ENCODE measurements at regions of chr3 and their contacts with region 1.

Region 1: GRCh38 chr3:30628901-30629590 is 22.6 kb downstream of the TGFBR2 start:
- DNase-seq: no peak
- ATAC-seq: peak; percentile 49
- H3K4me3 Mint-ChIP-seq: peak overlapping the region; percentile 61
- H3K27ac Mint-ChIP-seq: peak overlapping the region; percentile 89
- H3K4me1 Mint-ChIP-seq: peaks cover 81% of the 10 kb centered on the region
- H3K27me3 Mint-ChIP-seq: no peaks in the 10 kb centered on the region

Region 2: DNA sequence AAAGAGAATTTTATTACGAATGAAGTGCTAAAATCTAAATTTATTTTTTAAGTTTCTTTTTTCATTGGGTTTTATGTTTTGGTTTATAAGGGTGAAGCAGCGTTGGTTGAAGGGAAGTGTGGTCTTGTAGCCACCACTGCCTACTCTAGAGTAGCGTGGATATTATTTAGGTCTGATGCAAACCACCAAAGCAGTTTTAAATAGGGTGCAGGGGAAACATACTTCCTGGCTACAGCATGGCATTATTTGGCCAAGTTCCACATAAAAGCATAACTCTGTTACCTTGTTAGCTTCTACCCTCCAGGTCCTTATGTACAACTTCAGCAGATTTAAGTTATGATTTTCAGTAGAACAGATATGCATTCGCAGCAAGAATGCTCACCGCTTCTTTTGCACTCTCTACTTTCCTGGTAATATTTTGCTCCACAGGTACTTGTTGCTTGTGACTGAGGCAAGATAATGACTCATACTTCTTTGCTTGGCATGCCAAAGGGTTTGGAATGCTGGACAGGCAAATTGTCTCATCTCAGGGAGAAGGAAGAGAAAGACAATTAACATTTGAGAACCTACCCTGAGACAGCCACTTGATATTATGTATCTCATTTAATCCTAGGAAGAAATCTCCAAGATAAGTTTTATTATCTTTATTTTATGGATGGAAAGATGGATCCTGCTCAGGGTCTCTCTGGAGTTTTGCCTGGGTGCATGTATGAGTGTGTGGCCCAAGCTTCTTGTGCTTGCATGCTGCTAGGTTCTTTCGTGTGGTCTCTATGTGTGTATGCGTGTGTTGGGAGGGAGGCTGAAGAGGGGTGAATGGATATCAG is 17.2 kb before region 1 on chr3:
- POLR2A ChIA-PET with region 1: interaction called, 45 read pairs
- DNase-seq: no peak
- ATAC-seq: peak; percentile 10
- H3K4me3 Mint-ChIP-seq: peak overlapping the region; percentile 97
- H3K27ac Mint-ChIP-seq: peak overlapping the region; percentile 85
- H3K4me1 Mint-ChIP-seq: peaks cover 70% of the 10 kb centered on the region
- H3K27me3 Mint-ChIP-seq: no peaks in the 10 kb centered on the region

Region 3: GRCh38 chr3:30658328-30659052 is 29.4 kb after region 1 on chr3:
- POLR2A ChIA-PET with region 1: interaction called, 15 read pairs
- DNase-seq: no peak
- ATAC-seq: peak; percentile 58
- H3K4me3 Mint-ChIP-seq: peak overlapping the region; percentile 82
- H3K27ac Mint-ChIP-seq: peak overlapping the region; percentile 96
- H3K4me1 Mint-ChIP-seq: peaks cover 83% of the 10 kb centered on the region
- H3K27me3 Mint-ChIP-seq: no peaks in the 10 kb centered on the region

Measured in activated naive CD8-positive, alpha-beta T cell treated with anti-CD3 and anti-CD28 coated beads, Interleukin-2, amount 10 ng/mL, durations not matched to agents 7 days and 5 days (primary cell).